Stomach (tissue), 19 donors: ENCODE measurements at regions of chr1 and their contacts with region 1.

Region 1: DNA sequence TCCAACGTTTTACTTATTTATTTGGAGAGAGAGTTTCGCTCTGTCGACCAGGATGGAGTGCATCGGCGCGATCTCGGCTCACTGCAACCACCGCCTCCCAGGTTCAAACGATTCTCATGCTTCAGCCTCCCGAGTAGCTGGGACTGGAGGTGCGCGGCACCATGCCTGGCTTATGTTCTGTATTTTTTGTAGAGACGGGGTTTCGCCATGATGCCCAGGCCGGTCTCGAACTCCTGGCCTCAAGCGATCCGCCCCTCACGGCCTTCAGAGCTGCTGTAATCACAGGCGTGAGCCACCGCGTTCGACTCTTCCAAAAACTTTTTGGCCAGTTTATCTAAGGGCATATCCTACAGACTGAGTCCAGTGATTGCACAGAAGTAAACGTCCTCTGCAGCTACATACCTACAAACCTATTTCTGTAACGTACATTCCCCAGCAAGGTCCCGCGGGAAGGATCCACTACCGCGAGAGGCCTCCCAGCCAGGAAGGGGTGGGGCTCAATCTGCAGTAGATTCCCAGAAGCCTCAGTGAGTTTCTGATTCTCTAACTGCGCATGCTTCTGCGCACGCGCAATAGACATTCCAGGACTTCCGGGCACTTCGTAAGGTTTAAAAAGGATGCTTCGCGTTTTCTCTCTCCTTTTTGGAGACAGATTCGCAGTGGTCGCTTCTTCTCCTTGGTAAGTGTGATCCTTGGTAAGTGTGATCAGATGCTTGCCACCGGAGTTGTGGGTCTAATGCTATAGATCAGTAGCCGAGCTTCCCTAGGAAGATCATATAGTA is at the start of gene RCC1:
- DNase-seq: peak; percentile 97 to 99
- H3K4me3 ChIP-seq: peak within 1 kb of the TSS; percentile 72 to 90 (median 76)
- H3K27ac ChIP-seq: peak within 1 kb of the TSS; percentile 78 to 93 (median 88)
- H3K4me1 ChIP-seq: peaks cover 30 to 53% (median 42%) of the 10 kb centered on the region in 4 donors
- H3K27me3 ChIP-seq: no peaks in the 10 kb centered on the region
- CTCF ChIP-seq: no peak
- EP300 ChIP-seq: no peak
- POLR2A ChIP-seq: peak in 2 of 4 donors; percentile 85 to 94
- total RNA-seq, gene RCC1: 6.7 to 116 (median 24.6) TPM

Region 2: DNA sequence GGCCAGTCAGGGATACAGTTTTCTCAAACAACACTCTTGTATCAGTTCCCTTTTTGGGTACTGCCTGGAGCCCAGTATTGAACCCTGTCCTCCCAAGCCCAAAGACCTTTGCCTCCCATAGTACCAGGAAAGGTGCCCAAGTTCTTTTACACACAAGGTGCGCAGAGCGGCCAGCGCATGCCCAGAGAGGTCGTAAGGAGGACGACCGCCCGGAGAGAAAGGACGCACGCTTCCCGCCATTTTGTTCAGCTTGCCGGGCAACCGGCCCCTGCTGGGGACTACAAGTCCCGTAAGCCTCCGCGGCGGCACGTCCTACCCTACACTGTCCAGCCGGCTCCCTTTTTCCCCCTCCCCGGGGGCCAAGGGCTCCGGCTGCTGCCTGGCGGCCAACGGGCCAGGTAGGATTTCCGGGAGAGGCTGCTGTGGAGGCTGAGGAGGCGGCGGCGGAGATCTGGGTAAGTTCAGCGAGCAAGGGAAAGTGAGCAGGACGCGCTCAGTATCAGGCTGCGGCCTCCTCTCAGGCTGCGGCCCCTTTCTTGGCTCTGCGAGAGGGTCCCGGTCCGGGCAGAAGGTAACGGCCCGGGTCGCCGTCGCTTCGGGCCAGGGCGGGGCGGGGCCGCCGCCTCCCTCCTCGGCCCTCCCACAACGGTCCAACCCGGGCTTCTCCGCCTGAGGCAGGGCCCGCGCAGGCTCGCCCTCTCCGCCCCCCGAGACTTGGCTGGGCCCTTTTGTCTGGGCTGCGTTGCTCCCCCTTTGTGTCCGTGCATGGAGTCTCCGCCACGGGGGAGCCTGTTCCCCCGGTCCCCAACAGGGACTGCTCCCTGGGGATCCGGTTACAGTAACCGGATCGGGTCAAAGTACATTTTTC is 136.0 kb before region 1 on chr1 and contains the start of gene PHACTR4:
- intact Hi-C with region 1: loop called (anchors 10 kb)
- DNase-seq: peak; percentile 94 to 97
- H3K4me3 ChIP-seq: peak within 1 kb of the TSS; percentile 70 to 92 (median 78)
- H3K27ac ChIP-seq: peak within 1 kb of the TSS; percentile 91 to 97 (median 97)
- H3K4me1 ChIP-seq: peaks cover 15 to 63% (median 42%) of the 10 kb centered on the region in 4 donors
- H3K27me3 ChIP-seq: no peaks in the 10 kb centered on the region
- CTCF ChIP-seq: peak in 1 of 7 experiments; percentile 13
- EP300 ChIP-seq: no peak
- POLR2A ChIP-seq: peak in 1 of 4 donors; percentile 47
- total RNA-seq, gene PHACTR4: 20.4 to 40.0 (median 25.0) TPM